PC-9 (cell line): ENCODE measurements at regions of chr13 and their contacts with region 1.

Region 1: DNA sequence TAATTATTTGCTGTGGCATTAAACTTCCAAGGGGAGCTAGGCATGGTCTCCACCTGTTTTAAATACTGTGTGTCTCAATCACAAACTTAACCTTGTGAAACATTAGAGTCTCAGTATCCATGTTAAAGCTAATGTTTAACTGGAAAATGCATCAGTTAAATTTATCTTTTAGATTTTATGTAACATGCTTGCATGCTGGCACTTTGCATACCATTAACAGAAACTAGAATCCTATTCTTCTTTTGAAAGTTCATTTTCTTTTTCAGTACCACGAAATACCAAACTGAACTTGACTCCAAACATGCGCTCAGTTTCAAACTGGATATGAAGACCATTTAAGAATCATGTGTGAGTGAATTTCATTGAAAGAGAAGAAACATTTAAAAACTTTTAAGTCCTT is 328.9 kb upstream of the SLC10A2 start:
- DNase-seq: no peak
- H3K4me3 ChIP-seq: no peak overlapping the region
- H3K27ac ChIP-seq: no peak overlapping the region
- H3K4me1 ChIP-seq: no peaks in the 10 kb centered on the region
- H3K27me3 ChIP-seq: no peaks in the 10 kb centered on the region
- CTCF ChIP-seq: no peak

Region 2: GRCh38 chr13:103406967-103407366 is 11.8 kb after region 1 on chr13:
- CTCF ChIA-PET with region 1: no interaction called
- POLR2A ChIA-PET with region 1: no interaction called
- intact Hi-C with region 1: no loop called
- DNase-seq: no peak
- H3K4me3 ChIP-seq: no peak overlapping the region
- H3K27ac ChIP-seq: no peak overlapping the region
- H3K4me1 ChIP-seq: peaks cover 16% of the 10 kb centered on the region
- H3K27me3 ChIP-seq: no peaks in the 10 kb centered on the region
- CTCF ChIP-seq: no peak

Region 3: GRCh38 chr13:103531278-103531677 is 136.1 kb after region 1 on chr13:
- CTCF ChIA-PET with region 1: no interaction called
- POLR2A ChIA-PET with region 1: no interaction called
- intact Hi-C with region 1: no loop called
- DNase-seq: no peak
- H3K4me3 ChIP-seq: no peak overlapping the region
- H3K27ac ChIP-seq: no peak overlapping the region
- H3K4me1 ChIP-seq: 0 out of 2 replicates have a peak, but pooled peaks cover 3% of the 10 kb centered on the region
- H3K27me3 ChIP-seq: no peaks in the 10 kb centered on the region
- CTCF ChIP-seq: no peak

Region 4: GRCh38 chr13:103573446-103573845 is 178.3 kb after region 1 on chr13:
- CTCF ChIA-PET with region 1: no interaction called
- POLR2A ChIA-PET with region 1: interaction called, 11 read pairs
- intact Hi-C with region 1: no loop called
- DNase-seq: no peak
- H3K4me3 ChIP-seq: no peak overlapping the region
- H3K27ac ChIP-seq: no peak overlapping the region
- H3K4me1 ChIP-seq: no peaks in the 10 kb centered on the region
- H3K27me3 ChIP-seq: no peaks in the 10 kb centered on the region
- CTCF ChIP-seq: no peak